ENCODE measurements at regions of chr16 and their contacts with region 1.

Region 1: GRCh38 chr16:57213462-57213861 is 27.3 kb downstream of the RSPRY1 start:
- DNase-seq: no peak
- ATAC-seq: no peak
- H3K4me3 ChIP-seq: no peak overlapping the region
- H3K27ac ChIP-seq: no peak overlapping the region
- H3K4me1 ChIP-seq: no peaks in the 10 kb centered on the region
- H3K27me3 ChIP-seq: no peaks in the 10 kb centered on the region
- CTCF ChIP-seq: no peak

Region 2: GRCh38 chr16:57233944-57234706 is 20.7 kb after region 1 on chr16:
- CTCF ChIA-PET with region 1: no interaction called
- POLR2A ChIA-PET with region 1: no interaction called
- in situ Hi-C with region 1: no loop called
- intact Hi-C with region 1: loop called (anchors 1 kb)
- DNase-seq: no peak
- ATAC-seq: no peak
- H3K4me3 ChIP-seq: no peak overlapping the region
- H3K27ac ChIP-seq: no peak overlapping the region
- H3K4me1 ChIP-seq: no peaks in the 10 kb centered on the region
- H3K27me3 ChIP-seq: no peaks in the 10 kb centered on the region
- CTCF ChIP-seq: no peak

Measured in Panc1 (cell line).